Ovary (tissue), 10 donors: ENCODE measurements at regions of chr2 and their contacts with region 1.

Region 1: GRCh38 chr2:218395797-218396687 is 3.6 kb upstream of the CTDSP1 start:
- DNase-seq: peak; percentile 96 to 97 (median 97)
- H3K4me3 ChIP-seq: peak overlapping the region; percentile 99
- H3K27ac ChIP-seq: peak overlapping the region; percentile 97 to 98
- H3K4me1 ChIP-seq: peaks cover 5% of the 10 kb centered on the region
- H3K27me3 ChIP-seq: no peaks in the 10 kb centered on the region
- CTCF ChIP-seq: peak; percentile 92 to 98 (median 95)
- EP300 ChIP-seq: no peak
- POLR2A ChIP-seq: peak; percentile 55

Region 2: DNA sequence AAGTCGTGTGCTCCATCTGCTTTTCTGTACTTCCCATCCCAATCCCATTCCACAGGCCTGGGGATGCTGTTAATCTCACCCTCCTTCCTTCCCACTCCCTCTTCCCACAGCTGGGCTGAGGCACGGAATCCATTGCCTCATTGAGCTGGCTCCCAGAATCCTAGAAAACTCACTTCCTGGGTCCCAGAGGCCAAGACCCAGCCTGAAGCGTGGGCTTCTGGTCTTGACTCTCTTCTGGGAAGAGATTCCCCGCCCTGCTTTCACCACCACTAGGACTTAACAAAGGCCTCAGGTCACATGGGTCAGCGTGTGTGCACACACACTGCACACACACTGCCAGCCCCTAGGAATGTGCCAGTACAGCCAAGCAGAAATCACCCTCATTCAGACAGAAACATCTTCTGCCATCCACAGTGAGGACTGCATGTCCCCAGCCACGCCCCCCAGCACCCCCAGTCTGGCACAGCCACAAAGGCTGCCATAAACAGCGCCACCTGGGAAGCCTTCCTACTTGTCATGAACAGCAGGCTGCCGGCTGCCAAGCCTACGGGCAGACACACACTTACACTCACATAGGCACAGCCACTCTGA is 559.0 kb before region 1 on chr2:
- intact Hi-C with region 1: no loop called
- DNase-seq: peak in 3 of 5 donors; percentile 35 to 66 (median 62)
- H3K4me3 ChIP-seq: no peak overlapping the region
- H3K27ac ChIP-seq: peak overlapping the region in 1 of 2 donors; percentile 8
- H3K4me1 ChIP-seq: peaks cover 23% of the 10 kb centered on the region
- H3K27me3 ChIP-seq: no peaks in the 10 kb centered on the region
- CTCF ChIP-seq: no peak
- EP300 ChIP-seq: no peak
- POLR2A ChIP-seq: no peak

Region 3: DNA sequence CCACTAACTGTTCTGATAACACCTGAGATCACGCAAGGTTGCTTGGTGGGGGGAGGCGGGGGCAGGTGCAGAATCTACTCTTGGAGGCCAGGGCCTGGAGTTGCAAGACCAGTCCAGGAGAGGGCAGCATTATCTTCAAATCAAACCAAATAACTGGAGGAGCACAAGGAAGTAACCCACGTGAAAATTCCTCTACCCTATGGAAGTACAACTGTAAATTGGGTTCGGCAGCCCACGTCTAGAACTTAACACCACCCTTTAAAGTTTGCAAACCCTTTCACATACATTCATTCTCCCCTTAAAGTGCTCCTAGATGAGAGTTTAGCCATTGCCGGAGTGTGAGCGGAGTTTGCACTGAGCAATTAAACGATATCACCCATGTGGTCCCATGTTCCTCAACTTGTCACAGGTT is 209.7 kb before region 1 on chr2:
- intact Hi-C with region 1: loop called in 1 of 4 experiments (anchors 10 kb)
- DNase-seq: peak; percentile 38 to 74 (median 62)
- H3K4me3 ChIP-seq: no peak overlapping the region
- H3K27ac ChIP-seq: no peak overlapping the region
- H3K4me1 ChIP-seq: no peaks in the 10 kb centered on the region
- H3K27me3 ChIP-seq: no peaks in the 10 kb centered on the region
- CTCF ChIP-seq: peak; percentile 33 to 68 (median 55)
- EP300 ChIP-seq: no peak
- POLR2A ChIP-seq: no peak

Region 4: GRCh38 chr2:218292048-218293014 is 103.7 kb before region 1 on chr2 and contains the start of gene TMBIM1:
- intact Hi-C with region 1: loop called in 3 of 4 experiments (anchors 5 kb)
- DNase-seq: peak; percentile 76 to 89 (median 83)
- H3K4me3 ChIP-seq: peak within 1 kb of the TSS; percentile 94
- H3K27ac ChIP-seq: peak within 1 kb of the TSS; percentile 89 to 99
- H3K4me1 ChIP-seq: peaks cover 11% of the 10 kb centered on the region
- H3K27me3 ChIP-seq: no peaks in the 10 kb centered on the region
- CTCF ChIP-seq: peak; percentile 72 to 94 (median 87)
- EP300 ChIP-seq: no peak
- POLR2A ChIP-seq: peak; percentile 83
- total RNA-seq, gene TMBIM1: 80.6 to 137 (median 114) TPM

Region 5: GRCh38 chr2:218301176-218301819 is 94.7 kb before region 1 on chr2:
- intact Hi-C with region 1: loop called in 3 of 4 experiments (anchors 5 kb)
- DNase-seq: peak; percentile 82 to 90 (median 83)
- H3K4me3 ChIP-seq: no peak overlapping the region
- H3K27ac ChIP-seq: no peak overlapping the region
- H3K4me1 ChIP-seq: peaks cover 2% of the 10 kb centered on the region
- H3K27me3 ChIP-seq: no peaks in the 10 kb centered on the region
- CTCF ChIP-seq: peak; percentile 93 to 98 (median 94)
- EP300 ChIP-seq: no peak
- POLR2A ChIP-seq: no peak

Region 6: GRCh38 chr2:218319813-218320365 is 76.2 kb before region 1 on chr2:
- intact Hi-C with region 1: no loop called
- DNase-seq: no peak
- H3K4me3 ChIP-seq: no peak overlapping the region
- H3K27ac ChIP-seq: no peak overlapping the region
- H3K4me1 ChIP-seq: peaks cover 10% of the 10 kb centered on the region
- H3K27me3 ChIP-seq: no peaks in the 10 kb centered on the region
- CTCF ChIP-seq: no peak
- EP300 ChIP-seq: no peak
- POLR2A ChIP-seq: no peak

Region 7: DNA sequence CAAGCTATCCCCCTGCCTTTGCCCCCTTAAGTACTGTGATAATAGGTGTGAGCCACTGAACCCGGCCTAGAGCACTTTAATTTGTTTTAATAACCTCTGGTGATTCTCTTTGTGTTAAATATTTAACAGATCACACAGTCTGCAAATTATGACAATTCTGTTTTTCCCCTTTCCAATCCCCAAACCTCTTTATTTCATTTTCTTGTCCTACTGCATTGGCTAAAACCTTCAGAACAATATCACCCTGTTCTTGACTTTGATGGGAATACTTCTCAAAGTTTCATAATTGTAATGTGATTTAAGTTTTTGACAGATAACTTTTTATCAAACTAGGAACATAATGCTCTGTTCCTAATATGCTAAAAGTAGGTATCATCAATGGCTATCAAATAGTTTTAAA is 127.6 kb after region 1 on chr2:
- intact Hi-C with region 1: no loop called
- DNase-seq: no peak
- H3K4me3 ChIP-seq: no peak overlapping the region
- H3K27ac ChIP-seq: no peak overlapping the region
- H3K4me1 ChIP-seq: no peaks in the 10 kb centered on the region
- H3K27me3 ChIP-seq: no peaks in the 10 kb centered on the region
- CTCF ChIP-seq: no peak
- EP300 ChIP-seq: no peak
- POLR2A ChIP-seq: no peak

Region 8: GRCh38 chr2:219418155-219418569 is 1022.1 kb after region 1 on chr2 and contains the start of gene DES:
- intact Hi-C with region 1: no loop called
- DNase-seq: peak; percentile 68 to 85 (median 81)
- H3K4me3 ChIP-seq: peak within 1 kb of the TSS; percentile 43
- H3K27ac ChIP-seq: peak within 1 kb of the TSS; percentile 62 to 71
- H3K4me1 ChIP-seq: peaks cover 5% of the 10 kb centered on the region
- H3K27me3 ChIP-seq: no peaks in the 10 kb centered on the region
- CTCF ChIP-seq: no peak
- EP300 ChIP-seq: no peak
- POLR2A ChIP-seq: peak; percentile 20
- total RNA-seq, gene DES: 86.5 to 1,061 (median 184) TPM